Calu3 (cell line): ENCODE measurements at regions of chr9 and their contacts with region 1.

Region 1: DNA sequence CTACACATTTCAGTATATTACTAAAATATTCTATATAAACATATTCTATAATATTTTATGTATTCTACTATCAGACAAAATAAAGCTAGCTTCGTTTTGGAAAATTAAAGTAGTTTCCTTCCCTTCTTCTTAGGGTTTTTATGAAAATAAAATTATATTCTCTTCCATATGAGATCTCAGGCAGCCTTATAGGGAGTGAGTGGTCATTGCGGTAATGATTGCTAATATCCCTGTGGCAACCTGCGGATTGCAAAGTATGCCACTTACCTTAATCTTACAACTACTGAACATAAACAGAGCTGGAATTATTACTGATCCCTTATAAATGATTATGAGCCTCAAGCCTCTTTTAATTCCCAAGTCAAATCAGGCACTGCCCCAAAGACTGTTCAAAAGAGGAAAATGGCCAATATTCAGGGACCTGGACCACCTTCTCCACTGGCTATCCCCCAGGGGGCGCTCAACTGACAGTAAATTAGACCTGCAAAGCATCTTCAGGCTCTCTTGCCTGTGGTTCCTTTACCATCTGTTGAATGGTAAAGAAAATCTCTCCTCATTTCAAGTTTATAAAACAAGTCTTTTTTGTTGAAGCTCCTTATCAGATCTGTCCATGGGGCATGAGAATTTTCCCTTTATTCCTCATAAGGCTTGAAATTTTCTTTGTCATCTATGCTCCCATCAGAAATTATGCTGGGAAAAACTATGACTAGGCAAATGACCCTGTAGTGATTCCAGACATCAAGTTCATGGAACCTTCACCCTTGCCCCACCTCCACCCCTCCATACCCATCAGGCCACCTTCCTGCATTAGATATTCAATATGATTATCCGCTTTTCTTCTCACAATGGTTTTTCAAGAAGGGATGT is 163.9 kb downstream of the CEMIP2 start:
- DNase-seq: peak; percentile 80
- H3K4me3 Mint-ChIP-seq: no peak overlapping the region
- H3K27ac Mint-ChIP-seq: no peak overlapping the region
- H3K4me1 Mint-ChIP-seq: no peaks in the 10 kb centered on the region
- H3K27me3 Mint-ChIP-seq: no peaks in the 10 kb centered on the region
- CTCF ChIP-seq: peak; percentile 63

Region 2: DNA sequence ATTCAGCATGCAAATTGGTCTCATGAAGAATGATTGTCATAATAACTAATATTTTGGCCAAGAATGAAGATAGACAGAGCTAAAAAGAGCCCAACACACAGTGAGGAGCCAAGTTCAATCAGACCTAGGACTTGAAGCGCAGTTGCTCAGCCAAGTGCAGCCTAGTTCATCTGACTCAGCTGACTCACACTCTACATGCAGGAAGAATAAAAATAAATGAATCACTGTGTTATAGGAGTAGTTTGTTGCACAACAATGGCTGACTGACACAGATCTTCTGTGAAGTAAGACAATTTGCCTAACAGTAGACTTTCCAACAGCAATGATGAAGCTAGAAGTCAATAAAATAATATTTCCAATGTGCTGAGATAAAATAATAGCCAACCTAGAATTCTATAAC is 97.6 kb before region 1 on chr9:
- CTCF ChIA-PET with region 1: no interaction called
- intact Hi-C with region 1: loop called (anchors 5 kb)
- DNase-seq: peak; percentile 8
- H3K4me3 Mint-ChIP-seq: no peak overlapping the region
- H3K27ac Mint-ChIP-seq: peak overlapping the region; percentile 16
- H3K4me1 Mint-ChIP-seq: peaks cover 17% of the 10 kb centered on the region
- H3K27me3 Mint-ChIP-seq: no peaks in the 10 kb centered on the region
- CTCF ChIP-seq: no peak

Region 3: DNA sequence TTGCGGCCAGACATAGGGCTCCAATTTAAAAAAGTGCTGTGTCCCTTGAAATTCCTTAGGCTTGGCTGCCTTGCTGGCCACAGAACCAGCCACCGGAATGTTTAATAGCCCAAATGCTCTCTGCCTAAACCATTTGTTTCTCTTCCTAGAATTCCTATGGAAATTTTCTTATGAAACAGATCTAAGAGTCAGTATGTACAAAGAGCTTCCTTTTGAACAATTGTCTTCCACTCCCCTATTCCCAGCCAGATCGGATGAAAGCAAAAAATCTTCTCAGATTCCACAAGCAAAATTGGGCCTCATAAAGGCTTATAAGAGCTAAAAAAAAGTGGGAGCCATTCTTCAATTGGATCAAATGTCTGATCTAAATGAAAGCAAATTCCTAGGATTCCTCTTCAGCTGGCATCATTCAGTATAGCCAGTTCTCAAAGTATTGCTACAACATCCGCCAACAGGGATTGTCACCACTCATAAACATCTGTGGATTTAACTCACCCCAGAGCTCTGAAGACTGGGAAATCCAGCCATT is 59.6 kb after region 1 on chr9:
- CTCF ChIA-PET with region 1: no interaction called
- intact Hi-C with region 1: no loop called
- DNase-seq: no peak
- H3K4me3 Mint-ChIP-seq: no peak overlapping the region
- H3K27ac Mint-ChIP-seq: no peak overlapping the region
- H3K4me1 Mint-ChIP-seq: no peaks in the 10 kb centered on the region
- H3K27me3 Mint-ChIP-seq: no peaks in the 10 kb centered on the region
- CTCF ChIP-seq: no peak

Region 4: GRCh38 chr9:71683598-71684235 is 79.3 kb after region 1 on chr9:
- CTCF ChIA-PET with region 1: no interaction called
- intact Hi-C with region 1: loop called (anchors 2 kb)
- DNase-seq: no peak
- H3K4me3 Mint-ChIP-seq: no peak overlapping the region
- H3K27ac Mint-ChIP-seq: peak overlapping the region; percentile 28
- H3K4me1 Mint-ChIP-seq: peaks cover 65% of the 10 kb centered on the region
- H3K27me3 Mint-ChIP-seq: no peaks in the 10 kb centered on the region
- CTCF ChIP-seq: no peak

Region 5: DNA sequence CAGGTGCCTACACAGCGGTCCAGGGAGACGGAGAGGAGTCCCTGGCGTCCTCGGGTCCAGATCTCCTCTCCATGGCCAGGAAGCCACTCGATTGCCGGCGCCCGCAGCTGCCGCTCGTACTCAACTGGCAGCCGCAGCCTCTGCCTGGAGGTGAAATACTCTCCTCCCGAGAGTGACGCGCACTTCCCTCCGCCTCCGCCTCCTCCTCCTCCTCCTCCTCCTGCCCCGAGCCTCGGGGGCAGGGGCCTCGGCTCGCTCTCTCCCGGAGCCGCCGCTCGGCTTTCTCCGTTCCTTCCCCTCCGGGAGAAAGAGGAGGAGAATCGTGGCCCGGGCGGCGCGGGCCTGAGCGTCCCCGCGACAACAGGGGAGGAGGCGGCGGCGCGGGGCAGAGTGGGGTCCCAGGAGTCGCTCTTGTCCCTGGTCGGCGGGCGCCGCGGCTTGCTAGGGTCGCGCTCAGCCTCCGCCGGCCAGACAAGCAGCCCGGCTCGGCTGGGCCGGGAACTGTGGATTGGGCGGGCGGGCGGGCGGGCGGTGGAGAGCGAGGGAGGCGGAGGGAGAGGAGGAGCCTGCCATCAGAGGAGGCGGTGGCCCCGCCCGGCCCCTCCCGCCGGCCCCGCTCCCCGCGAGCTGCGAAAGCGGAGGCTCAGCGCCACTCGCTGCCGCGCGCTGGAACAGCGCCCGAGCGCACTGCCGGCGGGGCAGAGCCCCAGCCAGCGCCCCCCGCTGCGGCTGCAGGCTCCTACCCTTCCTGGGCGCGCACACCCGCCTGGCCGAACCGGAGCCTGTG is 164.2 kb after region 1 on chr9 and contains the start of gene CEMIP2:
- CTCF ChIA-PET with region 1: no interaction called
- intact Hi-C with region 1: loop called (anchors 5 kb)
- DNase-seq: peak; percentile 85
- H3K4me3 Mint-ChIP-seq: peak within 1 kb of the TSS; percentile 97
- H3K27ac Mint-ChIP-seq: peak within 1 kb of the TSS; percentile 94
- H3K4me1 Mint-ChIP-seq: peaks cover 19% of the 10 kb centered on the region
- H3K27me3 Mint-ChIP-seq: no peaks in the 10 kb centered on the region
- CTCF ChIP-seq: no peak
- total RNA-seq, gene CEMIP2: 89.0 and 122 TPM in 2 replicates